H1 (cell line): ENCODE measurements at regions of chr2 and their contacts with region 1.

Region 1: GRCh38 chr2:96868555-96869280 is 1.2 kb downstream of the SEMA4C start:
- DNase-seq: peak; percentile 43 to 86
- H3K4me3 ChIP-seq: peak overlapping the region; percentile 76 to 86 (median 80)
- H3K27ac ChIP-seq: peak overlapping the region; percentile 91
- H3K4me1 ChIP-seq: peaks cover 11 to 28% (median 18%) of the 10 kb centered on the region in 4 experiments
- H3K27me3 ChIP-seq: peaks cover 0 to 3% (median 0%) of the 10 kb centered on the region in 4 experiments; a peak in 2 of 7 replicates
- CTCF ChIP-seq: peak in 2 of 3 experiments; percentile 50 to 52; a peak in 3 of 4 replicates
- EP300 ChIP-seq: no peak
- POLR2A ChIP-seq: peak in 1 of 2 experiments; percentile 81; a peak in 2 of 3 replicates
- RAD21 ChIP-seq: peak; percentile 8 to 44; a peak in 2 of 4 replicates

Region 2: DNA sequence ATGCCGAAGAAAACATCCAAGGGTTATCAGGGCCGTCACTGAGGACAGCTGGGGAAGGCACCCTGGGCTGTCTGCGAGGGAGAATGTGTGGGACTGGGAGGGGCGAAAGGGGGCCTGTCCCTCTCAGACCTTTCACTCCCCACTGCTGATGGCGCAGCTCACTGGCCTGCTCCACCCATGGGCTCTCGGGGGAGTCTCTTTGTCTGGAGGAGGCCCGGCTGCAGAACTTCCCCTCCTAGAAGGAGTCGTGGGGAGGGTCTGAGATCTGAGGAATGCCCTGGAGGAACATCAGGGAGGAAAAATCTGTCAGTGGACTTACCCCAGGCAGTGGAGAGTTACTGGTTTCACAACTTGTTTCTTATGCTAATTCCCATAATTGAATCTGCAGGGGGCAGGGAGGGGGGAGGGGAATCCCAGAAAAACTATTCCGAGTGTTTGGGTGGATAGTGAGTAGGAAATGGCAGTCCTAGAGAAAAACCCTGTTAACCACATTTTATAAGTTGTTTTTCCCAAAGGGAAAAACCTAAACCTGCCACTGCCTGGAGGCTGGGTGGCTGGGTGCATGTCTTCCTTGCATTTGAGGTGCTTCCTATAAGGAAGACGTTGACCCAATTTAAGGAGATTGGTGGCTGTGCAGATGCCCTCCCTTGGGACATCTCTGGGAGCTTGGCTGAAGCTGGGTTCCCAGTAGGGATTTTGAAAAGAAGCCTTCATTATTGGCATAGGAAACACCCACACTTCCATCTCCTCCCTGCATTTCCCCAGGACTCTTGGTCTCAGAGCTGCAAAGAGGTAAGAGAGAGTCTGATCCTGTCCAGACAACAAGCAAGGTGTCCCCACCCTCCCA is 12.9 kb after region 1 on chr2:
- CTCF ChIA-PET with region 1: interaction called, 27 read pairs
- POLR2A ChIA-PET with region 1: interaction called, 25 read pairs
- DNase-seq: peak in 1 of 2 experiments; percentile 53
- H3K4me3 ChIP-seq: peak overlapping the region in 2 of 4 experiments; percentile 7 to 36; a peak in 4 of 8 replicates
- H3K27ac ChIP-seq: 0 out of 2 replicates have a peak overlapping the region, but pooled peaks have one; percentile 8
- H3K4me1 ChIP-seq: peaks cover 3 to 27% (median 15%) of the 10 kb centered on the region in 4 experiments
- H3K27me3 ChIP-seq: peaks cover 0 to 2% (median under 1%) of the 10 kb centered on the region in 4 experiments; a peak in 2 of 7 replicates
- CTCF ChIP-seq: no peak
- EP300 ChIP-seq: no peak
- POLR2A ChIP-seq: no peak
- RAD21 ChIP-seq: no peak

Region 3: DNA sequence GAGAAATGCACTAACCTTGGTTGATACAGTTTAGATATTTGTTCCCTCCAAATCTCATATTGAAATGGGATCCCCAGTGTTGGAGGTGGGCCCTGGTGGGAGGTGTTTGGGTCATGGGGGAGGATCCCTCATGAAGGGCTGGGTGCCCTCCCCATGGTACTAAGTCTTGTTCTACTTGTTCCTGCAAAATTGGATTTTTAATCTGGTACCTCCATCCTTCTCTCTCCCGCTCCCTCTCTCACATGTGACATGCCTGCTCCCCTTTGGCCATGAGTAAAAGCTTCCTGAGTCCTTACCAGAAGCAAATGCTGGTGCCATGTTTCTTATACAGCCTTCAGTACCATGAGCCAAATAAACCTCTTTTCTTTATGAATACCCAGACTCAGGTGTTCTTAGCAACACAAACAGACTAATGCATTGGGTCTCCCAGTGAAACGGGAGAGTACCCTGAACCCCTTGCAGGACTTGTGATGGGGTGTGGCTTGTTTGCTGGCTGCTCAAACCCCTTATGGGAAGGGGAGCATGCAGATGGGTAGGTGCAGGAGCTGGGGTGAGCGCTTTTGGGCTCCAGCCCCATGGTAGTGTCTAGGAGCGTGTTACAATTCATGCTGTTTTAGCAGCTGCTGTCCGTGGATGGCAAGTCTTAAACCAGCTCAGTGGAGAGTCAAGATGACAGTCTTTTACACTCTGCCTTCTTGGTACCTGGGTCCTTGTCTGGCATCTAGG is 198.7 kb after region 1 on chr2:
- CTCF ChIA-PET with region 1: no interaction called
- POLR2A ChIA-PET with region 1: no interaction called
- DNase-seq: no peak
- H3K4me3 ChIP-seq: no peak overlapping the region
- H3K27ac ChIP-seq: no peak overlapping the region
- H3K4me1 ChIP-seq: no peaks in the 10 kb centered on the region
- H3K27me3 ChIP-seq: no peaks in the 10 kb centered on the region
- CTCF ChIP-seq: no peak
- EP300 ChIP-seq: no peak
- POLR2A ChIP-seq: no peak
- RAD21 ChIP-seq: no peak